ENCODE measurements at regions of chr1 and their contacts with region 1.

Region 1: GRCh38 chr1:91515618-91516393 is 15.2 kb downstream of the CDC7 start:
- DNase-seq: no peak
- ATAC-seq: no peak
- H3K4me3 ChIP-seq: no peak overlapping the region
- H3K27ac ChIP-seq: no peak overlapping the region
- H3K4me1 ChIP-seq: no peaks in the 10 kb centered on the region
- H3K27me3 ChIP-seq: no peaks in the 10 kb centered on the region
- CTCF ChIP-seq: no peak
- POLR2A ChIP-seq: no peak

Region 2: GRCh38 chr1:91929250-91929649 is 413.4 kb after region 1 on chr1:
- intact Hi-C with region 1: loop called (anchors 5 kb)
- DNase-seq: peak in 1 of 4 donors; percentile 15
- ATAC-seq: no peak
- H3K4me3 ChIP-seq: no peak overlapping the region
- H3K27ac ChIP-seq: no peak overlapping the region
- H3K4me1 ChIP-seq: no peaks in the 10 kb centered on the region
- H3K27me3 ChIP-seq: no peaks in the 10 kb centered on the region
- CTCF ChIP-seq: no peak
- POLR2A ChIP-seq: no peak